ENCODE measurements at regions of chr6 and their contacts with region 1.

Region 1: GRCh38 chr6:138001750-138002349 is 105.4 kb downstream of the PERP start:
- DNase-seq: peak; percentile 84
- H3K4me3 Mint-ChIP-seq: no peak overlapping the region
- H3K27ac Mint-ChIP-seq: no peak overlapping the region
- H3K4me1 Mint-ChIP-seq: peaks cover 16% of the 10 kb centered on the region
- H3K27me3 Mint-ChIP-seq: peaks cover 3% of the 10 kb centered on the region

Region 2: GRCh38 chr6:137497721-137498463 is 504.0 kb before region 1 on chr6:
- CTCF ChIA-PET with region 1: no interaction called
- intact Hi-C with region 1: loop called (anchors 10 kb)
- DNase-seq: no peak
- H3K4me3 Mint-ChIP-seq: peak overlapping the region; percentile 68
- H3K27ac Mint-ChIP-seq: no peak overlapping the region
- H3K4me1 Mint-ChIP-seq: peaks cover 46% of the 10 kb centered on the region
- H3K27me3 Mint-ChIP-seq: peaks cover 63% of the 10 kb centered on the region

Region 3: GRCh38 chr6:137873273-137873762 is 128.5 kb before region 1 on chr6:
- CTCF ChIA-PET with region 1: interaction called, 31 read pairs
- intact Hi-C with region 1: loop called (anchors 1 kb)
- DNase-seq: peak; percentile 97
- H3K4me3 Mint-ChIP-seq: peak overlapping the region; percentile 89
- H3K27ac Mint-ChIP-seq: peak overlapping the region; percentile 99
- H3K4me1 Mint-ChIP-seq: peaks cover 37% of the 10 kb centered on the region
- H3K27me3 Mint-ChIP-seq: no peaks in the 10 kb centered on the region

Region 4: GRCh38 chr6:137921823-137922222 is 80.0 kb before region 1 on chr6:
- CTCF ChIA-PET with region 1: no interaction called
- intact Hi-C with region 1: no loop called
- DNase-seq: no peak
- H3K4me3 Mint-ChIP-seq: no peak overlapping the region
- H3K27ac Mint-ChIP-seq: no peak overlapping the region
- H3K4me1 Mint-ChIP-seq: peaks cover 32% of the 10 kb centered on the region
- H3K27me3 Mint-ChIP-seq: no peaks in the 10 kb centered on the region

Region 5: GRCh38 chr6:138017166-138017757 is 15.4 kb after region 1 on chr6:
- CTCF ChIA-PET with region 1: interaction called, 15 read pairs
- intact Hi-C with region 1: no loop called
- DNase-seq: no peak
- H3K4me3 Mint-ChIP-seq: no peak overlapping the region
- H3K27ac Mint-ChIP-seq: no peak overlapping the region
- H3K4me1 Mint-ChIP-seq: no peaks in the 10 kb centered on the region
- H3K27me3 Mint-ChIP-seq: peaks cover 5% of the 10 kb centered on the region

Region 6: DNA sequence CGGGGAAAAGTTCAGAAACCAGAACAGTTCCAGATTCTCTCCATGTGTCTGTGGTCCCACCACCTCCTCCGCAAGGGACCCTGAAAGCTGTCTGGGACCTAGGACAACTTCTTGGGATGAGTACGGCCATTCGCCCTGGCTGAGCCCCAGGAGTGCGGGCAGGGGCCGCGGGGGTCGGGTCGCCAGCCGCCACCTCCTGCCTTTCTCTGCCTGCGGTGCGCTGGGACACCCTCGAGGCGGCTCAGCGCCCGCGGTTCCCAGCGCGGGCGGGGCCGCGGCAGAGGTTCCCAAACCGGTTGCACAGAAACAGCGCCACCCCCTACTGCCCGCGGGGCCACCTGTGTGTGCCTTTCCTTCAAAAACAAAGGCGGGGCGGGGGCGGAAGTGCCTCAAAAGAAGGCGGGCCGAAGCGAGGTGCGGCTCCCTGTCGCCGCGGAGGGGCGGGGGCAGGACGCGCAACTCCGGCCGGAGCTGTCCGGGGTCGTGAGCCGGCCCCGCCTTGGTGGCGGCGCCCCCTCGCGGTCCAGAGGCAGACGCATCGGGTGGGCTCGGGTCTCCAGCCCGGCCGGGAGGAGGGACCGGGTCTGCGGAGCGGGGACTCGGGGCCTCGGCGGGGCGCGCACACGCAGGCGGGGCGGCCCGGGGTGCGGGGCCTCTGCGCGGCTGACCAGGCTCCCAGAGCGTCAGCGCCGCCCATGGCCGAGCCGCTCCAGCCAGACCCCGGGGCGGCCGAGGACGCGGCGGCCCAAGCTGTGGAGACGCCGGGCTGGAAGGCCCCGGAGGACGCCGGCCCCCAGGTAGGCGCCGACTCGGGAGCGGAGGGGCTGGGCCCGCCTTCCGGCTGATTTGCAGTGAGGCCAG is 402.2 kb after region 1 on chr6 and contains the start of gene HEBP2:
- CTCF ChIA-PET with region 1: interaction called, 3 read pairs
- intact Hi-C with region 1: loop called (anchors 5 kb)
- DNase-seq: peak; percentile 98
- H3K4me3 Mint-ChIP-seq: peak within 1 kb of the TSS; percentile 81
- H3K27ac Mint-ChIP-seq: peak within 1 kb of the TSS; percentile 77
- H3K4me1 Mint-ChIP-seq: peaks cover 15% of the 10 kb centered on the region
- H3K27me3 Mint-ChIP-seq: no peaks in the 10 kb centered on the region
- total RNA-seq, gene HEBP2: 48.5 to 50.8 TPM

Region 7: GRCh38 chr6:139068846-139069245 is 1067.0 kb after region 1 on chr6:
- CTCF ChIA-PET with region 1: no interaction called
- intact Hi-C with region 1: no loop called
- DNase-seq: no peak
- H3K4me3 Mint-ChIP-seq: no peak overlapping the region
- H3K27ac Mint-ChIP-seq: no peak overlapping the region
- H3K4me1 Mint-ChIP-seq: no peaks in the 10 kb centered on the region
- H3K27me3 Mint-ChIP-seq: no peaks in the 10 kb centered on the region